Activated CD4-positive, alpha-beta memory T cell treated with anti-CD3 and anti-CD28 coated beads for 36 hours (primary cell): ENCODE measurements at regions of chrX and their contacts with region 1.

Region 1: DNA sequence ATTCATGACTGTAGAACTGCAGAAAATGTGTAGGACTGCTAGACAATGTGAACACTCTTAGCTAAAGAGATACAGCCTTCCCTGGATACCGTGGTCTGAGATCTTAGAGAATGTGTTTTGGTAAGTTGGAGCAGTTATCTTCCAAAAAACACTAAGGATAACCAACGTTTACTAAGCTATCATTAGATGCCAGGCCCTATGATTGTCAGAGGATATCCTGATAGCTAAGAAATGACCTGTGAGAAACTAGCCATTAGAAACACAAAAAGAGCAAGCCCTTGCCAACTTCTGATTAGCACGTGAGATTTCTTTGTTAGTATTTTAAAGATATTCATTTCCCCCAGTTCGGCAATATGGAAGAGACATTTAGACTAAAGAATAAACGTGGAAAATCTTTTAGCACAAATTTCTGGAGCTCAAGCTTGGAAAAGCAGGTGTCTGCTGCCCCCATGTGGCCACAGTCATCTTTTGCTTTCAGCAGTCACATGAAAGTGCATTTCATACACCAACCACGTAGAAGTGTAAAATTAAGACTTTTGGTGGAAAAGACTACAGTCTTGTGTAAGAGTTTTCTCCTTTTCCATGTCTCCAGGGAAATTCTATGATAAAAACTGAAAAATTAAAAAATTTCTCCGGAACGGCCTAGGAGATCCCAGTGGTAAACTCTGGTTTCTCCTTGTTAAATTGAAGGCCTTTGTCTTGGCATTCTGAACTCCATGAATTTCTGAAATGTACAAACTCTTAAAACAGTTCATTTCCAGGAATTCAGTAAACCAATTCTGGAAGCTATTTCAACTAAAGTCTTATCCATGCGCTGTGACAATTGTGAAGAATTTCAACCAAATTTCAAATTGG is 136.4 kb downstream of the ZNF674 start:
- DNase-seq: peak; percentile 73
- H3K4me3 Mint-ChIP-seq: no peak overlapping the region
- H3K27ac Mint-ChIP-seq: no peak overlapping the region
- H3K4me1 Mint-ChIP-seq: no peaks in the 10 kb centered on the region
- H3K27me3 Mint-ChIP-seq: no peaks in the 10 kb centered on the region

Region 2: GRCh38 chrX:45322382-45322781 is 1086.4 kb before region 1 on chrX:
- CTCF ChIA-PET with region 1: interaction called, 13 read pairs
- POLR2A ChIA-PET with region 1: no interaction called
- intact Hi-C with region 1: no loop called
- DNase-seq: peak; percentile 8
- H3K4me3 Mint-ChIP-seq: no peak overlapping the region
- H3K27ac Mint-ChIP-seq: no peak overlapping the region
- H3K4me1 Mint-ChIP-seq: peaks cover 2% of the 10 kb centered on the region
- H3K27me3 Mint-ChIP-seq: peaks cover 3% of the 10 kb centered on the region

Region 3: GRCh38 chrX:46386510-46386909 is 22.3 kb before region 1 on chrX:
- CTCF ChIA-PET with region 1: interaction called, 11 read pairs
- POLR2A ChIA-PET with region 1: no interaction called
- intact Hi-C with region 1: no loop called
- DNase-seq: no peak
- H3K4me3 Mint-ChIP-seq: no peak overlapping the region
- H3K27ac Mint-ChIP-seq: no peak overlapping the region
- H3K4me1 Mint-ChIP-seq: no peaks in the 10 kb centered on the region
- H3K27me3 Mint-ChIP-seq: no peaks in the 10 kb centered on the region

Region 4: GRCh38 chrX:46929439-46930261 is 520.9 kb after region 1 on chrX:
- CTCF ChIA-PET with region 1: no interaction called
- POLR2A ChIA-PET with region 1: no interaction called
- intact Hi-C with region 1: no loop called
- DNase-seq: no peak
- H3K4me3 Mint-ChIP-seq: no peak overlapping the region
- H3K27ac Mint-ChIP-seq: no peak overlapping the region
- H3K4me1 Mint-ChIP-seq: no peaks in the 10 kb centered on the region
- H3K27me3 Mint-ChIP-seq: no peaks in the 10 kb centered on the region